Prostate gland (tissue), 2 donors: ENCODE measurements at regions of chr17 and their contacts with region 1.

Region 1: GRCh38 chr17:76337413-76337777 is 16.3 kb downstream of the PRPSAP1 start:
- DNase-seq: no peak
- H3K4me3 ChIP-seq: no peak overlapping the region
- H3K27ac ChIP-seq: no peak overlapping the region
- H3K4me1 ChIP-seq: no peaks in the 10 kb centered on the region
- H3K27me3 ChIP-seq: no peaks in the 10 kb centered on the region
- CTCF ChIP-seq: no peak
- POLR2A ChIP-seq: no peak

Region 2: GRCh38 chr17:76408052-76408849 is 70.9 kb after region 1 on chr17:
- intact Hi-C with region 1: no loop called
- DNase-seq: peak; percentile 65
- H3K4me3 ChIP-seq: no peak overlapping the region
- H3K27ac ChIP-seq: no peak overlapping the region
- H3K4me1 ChIP-seq: no peaks in the 10 kb centered on the region
- H3K27me3 ChIP-seq: no peaks in the 10 kb centered on the region
- CTCF ChIP-seq: peak; percentile 29 to 70 (median 62)
- POLR2A ChIP-seq: no peak

Region 3: DNA sequence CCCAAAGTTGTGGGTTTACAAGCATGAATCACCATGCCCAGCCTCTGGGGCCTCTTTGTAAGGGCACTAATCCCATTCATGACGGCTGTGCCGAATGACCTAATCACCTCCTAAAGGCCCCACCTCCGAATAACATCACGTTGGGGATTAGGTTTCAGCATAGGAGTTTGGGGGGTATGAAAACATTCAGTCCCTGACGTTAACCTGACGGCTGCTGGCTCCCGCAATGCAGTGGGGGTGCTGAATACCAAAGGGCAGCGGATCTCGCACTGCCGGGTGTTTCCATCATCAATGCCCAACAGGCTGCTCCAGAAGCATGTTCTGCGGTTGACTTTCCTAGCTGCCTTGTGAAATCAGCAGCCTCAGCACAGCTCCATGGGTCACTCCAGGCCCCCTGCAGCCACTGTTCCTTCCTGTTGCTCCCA is 682.6 kb after region 1 on chr17:
- intact Hi-C with region 1: loop called (anchors 10 kb)
- DNase-seq: no peak
- H3K4me3 ChIP-seq: no peak overlapping the region
- H3K27ac ChIP-seq: no peak overlapping the region
- H3K4me1 ChIP-seq: no peaks in the 10 kb centered on the region
- H3K27me3 ChIP-seq: no peaks in the 10 kb centered on the region
- CTCF ChIP-seq: no peak
- POLR2A ChIP-seq: no peak